Calu3 (cell line): ENCODE measurements at regions of chr2 and their contacts with region 1.

Region 1: GRCh38 chr2:144370937-144371584 is 148.9 kb downstream of the ZEB2 start:
- DNase-seq: no peak
- H3K4me3 Mint-ChIP-seq: no peak overlapping the region
- H3K27ac Mint-ChIP-seq: no peak overlapping the region
- H3K4me1 Mint-ChIP-seq: peaks cover 39% of the 10 kb centered on the region
- H3K27me3 Mint-ChIP-seq: no peaks in the 10 kb centered on the region
- CTCF ChIP-seq: no peak

Region 2: DNA sequence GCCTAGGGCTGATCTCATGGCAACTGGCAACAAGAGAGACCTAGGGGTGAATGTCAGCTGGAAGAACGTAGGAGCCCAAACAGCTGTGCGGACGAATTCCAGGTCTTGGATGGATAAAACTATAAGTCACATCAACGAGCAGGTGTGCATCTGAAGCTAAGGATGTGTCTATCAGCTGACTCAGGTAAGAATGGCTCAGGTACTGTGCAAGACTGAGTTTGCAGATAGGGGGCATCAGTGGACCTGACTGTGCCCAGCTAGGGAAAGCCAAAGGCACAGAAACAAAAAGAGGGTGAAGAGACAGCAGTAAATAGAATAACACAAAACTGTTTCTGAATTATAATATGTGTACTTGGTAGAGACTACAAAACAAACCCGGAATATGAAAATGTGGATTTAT is 208.4 kb before region 1 on chr2:
- CTCF ChIA-PET with region 1: no interaction called
- intact Hi-C with region 1: loop called (anchors 2 kb)
- DNase-seq: peak; percentile 53
- H3K4me3 Mint-ChIP-seq: no peak overlapping the region
- H3K27ac Mint-ChIP-seq: no peak overlapping the region
- H3K4me1 Mint-ChIP-seq: no peaks in the 10 kb centered on the region
- H3K27me3 Mint-ChIP-seq: no peaks in the 10 kb centered on the region
- CTCF ChIP-seq: peak; percentile 50